ENCODE measurements at regions of chr22 and their contacts with region 1.

Region 1: DNA sequence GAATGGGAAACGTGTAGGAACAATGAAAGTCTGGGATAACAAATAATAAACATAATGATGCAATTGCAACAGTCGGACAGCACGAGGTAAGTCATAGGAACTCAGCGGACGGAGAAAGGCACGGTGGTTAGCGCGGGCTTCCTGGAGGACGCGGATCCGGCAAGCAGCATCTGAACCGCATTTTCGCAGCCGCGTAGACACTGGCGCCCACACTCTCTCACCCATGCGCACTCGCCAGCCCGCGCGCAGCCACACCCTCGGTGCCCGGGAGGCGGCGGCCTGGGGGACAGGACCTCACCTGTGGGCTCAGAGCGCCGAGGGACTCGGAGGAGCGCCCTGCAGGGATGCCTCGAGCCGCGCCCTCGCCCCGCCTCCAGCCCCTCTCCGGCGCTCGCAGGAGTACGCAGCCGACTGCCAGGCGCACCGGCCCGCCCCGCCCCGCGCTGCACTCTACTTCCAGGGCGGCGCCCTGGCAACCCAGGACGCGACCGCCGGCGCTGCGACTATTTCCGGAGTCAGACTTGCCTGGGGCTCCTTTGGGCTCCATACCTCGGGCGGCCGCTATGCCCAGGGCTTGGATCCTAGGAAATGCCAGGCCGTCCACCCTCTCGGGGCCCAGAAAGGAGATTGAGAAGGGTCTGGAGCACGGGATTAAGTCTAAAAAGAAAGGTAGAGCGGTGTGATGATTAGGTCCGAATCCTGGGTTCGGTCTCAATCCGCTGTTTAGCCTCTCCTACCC is at the start of gene TTLL1:
- DNase-seq: peak; percentile 94
- H3K4me3 Mint-ChIP-seq: peak within 1 kb of the TSS; percentile 97
- H3K27ac Mint-ChIP-seq: peak within 1 kb of the TSS; percentile 90
- H3K4me1 Mint-ChIP-seq: peaks cover 20% of the 10 kb centered on the region
- H3K27me3 Mint-ChIP-seq: no peaks in the 10 kb centered on the region
- total RNA-seq, gene TTLL1: 6.1 to 6.7 TPM

Region 2: GRCh38 chr22:42863349-42863961 is 225.7 kb before region 1 on chr22:
- CTCF ChIA-PET with region 1: interaction called, 5 read pairs
- POLR2A ChIA-PET with region 1: no interaction called
- intact Hi-C with region 1: loop called (anchors 2 kb)
- DNase-seq: peak; percentile 57
- H3K4me3 Mint-ChIP-seq: no peak overlapping the region
- H3K27ac Mint-ChIP-seq: peak overlapping the region; percentile 65
- H3K4me1 Mint-ChIP-seq: peaks cover 16% of the 10 kb centered on the region
- H3K27me3 Mint-ChIP-seq: no peaks in the 10 kb centered on the region

Region 3: DNA sequence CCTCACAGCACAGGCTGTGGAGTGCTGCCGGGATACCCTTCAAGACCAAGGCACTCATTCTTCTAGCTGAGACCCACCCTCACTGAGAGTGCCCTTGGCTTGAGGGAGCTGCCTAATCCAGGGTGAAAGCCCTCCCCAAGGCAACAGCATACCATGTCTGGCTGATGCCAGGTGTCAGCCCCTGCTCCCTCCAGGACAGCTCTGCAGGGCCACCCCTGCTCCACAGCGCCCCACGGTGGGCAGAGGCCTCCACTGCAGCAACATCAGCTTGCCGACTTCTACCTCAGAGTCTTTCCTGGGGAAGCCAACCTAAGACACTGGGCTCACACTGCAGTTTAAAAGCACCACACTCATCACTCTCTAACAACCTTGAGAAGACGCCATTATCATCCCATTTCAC is 29.0 kb before region 1 on chr22:
- CTCF ChIA-PET with region 1: no interaction called
- POLR2A ChIA-PET with region 1: no interaction called
- intact Hi-C with region 1: no loop called
- DNase-seq: peak; percentile 71
- H3K4me3 Mint-ChIP-seq: no peak overlapping the region
- H3K27ac Mint-ChIP-seq: no peak overlapping the region
- H3K4me1 Mint-ChIP-seq: no peaks in the 10 kb centered on the region
- H3K27me3 Mint-ChIP-seq: no peaks in the 10 kb centered on the region

Region 4: GRCh38 chr22:43151251-43152002 is 62.3 kb after region 1 on chr22 and contains the start of gene TSPO:
- CTCF ChIA-PET with region 1: interaction called, 3 read pairs
- POLR2A ChIA-PET with region 1: no interaction called
- intact Hi-C with region 1: loop called (anchors 5 kb)
- DNase-seq: peak; percentile 78
- H3K4me3 Mint-ChIP-seq: peak within 1 kb of the TSS; percentile 81
- H3K27ac Mint-ChIP-seq: peak within 1 kb of the TSS; percentile 77
- H3K4me1 Mint-ChIP-seq: peaks cover 18% of the 10 kb centered on the region
- H3K27me3 Mint-ChIP-seq: no peaks in the 10 kb centered on the region
- total RNA-seq, gene TSPO: 131 to 143 TPM

Measured in activated CD4-positive, alpha-beta memory T cell treated with anti-CD3 and anti-CD28 coated beads for 36 hours (primary cell).